IMR-90 (cell line): ENCODE measurements at regions of chr7 and their contacts with region 1.

Region 1: DNA sequence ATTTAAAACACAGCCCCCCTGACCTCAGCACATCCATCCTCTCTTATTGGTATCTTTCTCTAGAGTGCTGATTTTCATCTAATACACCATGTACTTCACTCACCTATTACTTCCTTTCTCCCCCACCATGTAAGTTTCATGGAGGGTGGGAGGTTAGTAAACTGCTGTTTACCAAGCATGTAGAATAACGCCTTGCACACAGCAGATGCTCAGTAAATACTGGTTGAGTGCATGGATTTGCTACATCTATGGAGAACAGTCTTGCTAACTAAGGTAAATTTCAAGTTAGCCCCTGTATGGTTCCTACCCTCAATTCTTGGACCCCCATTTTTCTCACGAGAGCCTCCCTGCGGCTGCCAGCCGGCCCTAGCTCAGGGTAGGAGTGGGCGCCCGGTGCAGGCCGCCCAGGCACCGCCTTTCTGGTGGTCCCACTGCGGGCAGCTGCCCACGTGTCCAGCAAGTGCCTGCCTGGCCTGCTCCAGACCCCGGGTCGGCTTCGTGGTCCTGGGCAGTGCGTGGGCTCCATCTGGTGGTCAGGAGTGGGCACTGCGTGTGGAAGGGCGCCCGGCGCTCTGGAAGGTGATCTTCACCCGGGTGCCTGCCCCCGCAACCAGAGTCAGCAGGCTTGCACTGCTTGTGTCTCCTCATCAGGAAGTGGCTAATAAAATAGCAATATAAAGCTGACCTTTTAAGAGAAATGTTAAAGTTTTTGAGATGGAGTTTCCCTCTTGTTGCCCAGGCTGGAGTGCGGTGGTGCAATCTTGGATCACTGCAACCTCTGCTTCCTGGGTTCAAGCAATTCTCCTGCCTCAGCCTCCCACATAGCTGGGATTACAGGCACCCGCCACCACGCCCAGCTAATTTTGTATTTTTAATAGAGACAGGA is 63.4 kb upstream of the DNAJB6 start:
- DNase-seq: peak; percentile 74
- ATAC-seq: peak; percentile 73
- H3K4me3 ChIP-seq: no peak overlapping the region
- H3K27ac ChIP-seq: peak overlapping the region; percentile 93
- H3K4me1 ChIP-seq: peaks cover 22% of the 10 kb centered on the region
- H3K27me3 ChIP-seq: no peaks in the 10 kb centered on the region
- CTCF ChIP-seq: peak; percentile 96
- POLR2A ChIP-seq: no peak
- RAD21 ChIP-seq: peak; percentile 91

Region 2: DNA sequence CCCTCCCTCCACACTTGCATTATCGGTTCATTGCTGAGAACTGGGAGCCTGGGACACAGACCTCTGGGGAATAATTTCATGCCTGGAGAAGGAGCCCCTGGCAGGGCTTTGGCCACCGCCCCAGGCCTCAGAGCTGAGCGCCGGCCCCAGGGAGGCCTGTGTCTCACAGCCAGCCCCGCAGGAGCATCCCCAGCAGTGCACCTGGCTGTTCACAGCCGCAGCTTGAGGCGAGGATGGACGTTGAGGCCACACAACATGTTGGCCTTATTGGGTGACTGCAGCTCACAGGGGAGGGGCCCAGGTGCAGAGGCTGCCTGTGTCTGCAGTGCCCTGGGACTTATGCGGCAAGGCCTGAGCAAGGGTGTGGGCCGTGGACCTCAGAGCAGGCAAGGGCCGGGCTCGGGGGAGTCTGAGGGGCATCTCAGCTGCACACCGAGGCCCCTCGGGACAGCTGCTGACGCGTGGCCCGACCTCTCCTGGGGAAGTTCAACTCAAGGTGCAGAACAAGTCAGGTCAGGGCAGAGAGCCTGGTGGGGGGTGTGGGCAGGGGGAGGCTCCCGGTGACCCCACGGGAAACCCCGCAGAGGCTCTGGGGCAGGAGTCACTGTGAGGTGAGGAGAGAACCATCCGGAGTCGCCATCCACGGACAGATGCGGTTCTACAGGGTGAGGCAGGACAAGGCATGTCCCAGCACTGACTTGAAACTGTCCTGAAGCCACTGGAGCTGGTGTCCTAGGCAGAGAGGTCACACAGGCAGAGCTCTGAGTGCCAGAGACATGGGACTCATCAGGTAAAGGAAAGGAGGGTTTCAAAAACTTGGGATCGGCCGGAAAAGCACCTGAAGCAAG is 147.9 kb before region 1 on chr7:
- CTCF ChIA-PET with region 1: no interaction called
- POLR2A ChIA-PET with region 1: no interaction called
- dilution Hi-C with region 1: no loop called
- in situ Hi-C with region 1: no loop called
- intact Hi-C with region 1: no loop called
- DNase-seq: no peak
- ATAC-seq: 0 out of 2 replicates have a peak, but pooled peaks have one; percentile 17
- H3K4me3 ChIP-seq: no peak overlapping the region
- H3K27ac ChIP-seq: no peak overlapping the region
- H3K4me1 ChIP-seq: no peaks in the 10 kb centered on the region; the same call in 1 of the 2 replicates
- H3K27me3 ChIP-seq: no peaks in the 10 kb centered on the region; the same call in 1 of the 2 replicates
- CTCF ChIP-seq: no peak
- POLR2A ChIP-seq: no peak
- RAD21 ChIP-seq: no peak

Region 3: GRCh38 chr7:157309990-157310668 is 36.7 kb after region 1 on chr7:
- CTCF ChIA-PET with region 1: no interaction called
- POLR2A ChIA-PET with region 1: no interaction called
- dilution Hi-C with region 1: no loop called
- in situ Hi-C with region 1: no loop called
- intact Hi-C with region 1: loop called (anchors 1 kb)
- DNase-seq: peak; percentile 96
- ATAC-seq: peak; percentile 94
- H3K4me3 ChIP-seq: no peak overlapping the region
- H3K27ac ChIP-seq: peak overlapping the region; percentile 96
- H3K4me1 ChIP-seq: peaks cover 16% of the 10 kb centered on the region
- H3K27me3 ChIP-seq: no peaks in the 10 kb centered on the region
- CTCF ChIP-seq: no peak
- POLR2A ChIP-seq: no peak
- RAD21 ChIP-seq: no peak